ENCODE measurements at regions of chr17 and their contacts with region 1.

Region 1: DNA sequence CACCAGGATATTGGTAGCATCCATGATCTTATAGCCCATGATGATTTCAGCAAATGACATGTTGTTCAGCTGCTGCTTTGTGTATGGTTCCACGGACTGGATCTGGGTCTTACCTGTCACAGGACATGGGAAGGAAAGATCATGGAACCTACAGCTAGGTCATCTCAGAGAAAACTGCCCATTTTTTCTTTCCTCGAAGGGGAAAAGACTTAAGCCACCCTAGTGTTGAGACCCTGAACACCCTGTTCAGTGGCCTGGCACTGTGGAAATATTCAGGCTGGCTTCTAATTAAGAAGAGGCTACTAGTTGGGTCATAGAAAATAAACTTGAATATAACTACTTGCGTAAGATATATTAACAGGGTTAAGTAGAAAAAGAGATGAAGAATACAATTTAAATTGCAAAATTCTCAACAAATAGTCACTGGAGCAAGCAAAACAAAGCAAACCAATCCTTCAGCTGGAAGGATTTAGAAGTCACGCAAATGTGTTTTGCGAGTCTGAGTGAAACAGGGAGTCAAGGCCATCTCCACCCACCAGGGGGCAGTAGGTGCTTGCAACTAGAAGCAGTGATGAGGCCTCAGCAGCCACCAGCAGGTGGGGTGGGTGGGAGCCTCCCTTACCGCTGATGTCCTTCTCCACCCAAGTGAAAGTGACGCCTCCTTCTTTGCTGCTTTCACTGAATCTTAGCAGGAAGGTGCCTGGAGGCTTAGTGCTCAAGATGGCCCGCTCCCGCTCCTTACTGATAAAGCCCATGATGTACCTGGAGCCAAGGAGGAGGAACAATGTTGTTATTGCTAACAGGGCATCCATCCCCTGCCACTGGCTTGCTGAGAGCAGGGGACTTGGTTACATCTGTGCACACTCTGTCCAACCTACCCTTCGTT is 34.3 kb downstream of the STAT5A start:
- DNase-seq: peak; percentile 91
- H3K4me3 ChIP-seq: no peak overlapping the region
- H3K27ac ChIP-seq: no peak overlapping the region
- H3K27me3 ChIP-seq: no peaks in the 10 kb centered on the region
- CTCF ChIP-seq: peak; percentile 100

Region 2: DNA sequence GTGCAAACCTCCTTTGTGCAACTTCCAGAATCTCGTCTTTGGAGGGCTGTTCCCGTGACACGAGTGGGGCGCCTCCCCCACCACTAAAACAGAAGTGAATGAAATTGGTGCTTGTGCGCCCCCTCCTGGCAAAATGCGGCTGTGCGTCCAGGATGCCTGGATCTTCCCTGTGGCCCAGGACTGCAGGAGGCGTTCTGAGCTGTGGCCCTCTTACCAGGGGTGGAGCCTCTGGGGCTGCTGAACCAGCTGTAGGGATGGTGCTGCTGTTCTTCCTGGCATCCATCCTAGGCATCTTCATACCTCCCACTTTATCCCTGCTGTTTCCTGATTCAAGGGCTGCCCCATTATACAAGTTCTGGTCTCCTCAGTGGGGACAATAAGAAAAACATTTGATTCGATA is 194.9 kb after region 1 on chr17:
- in situ Hi-C with region 1: loop called (anchors 25 kb)
- DNase-seq: peak; percentile 86
- H3K4me3 ChIP-seq: no peak overlapping the region
- H3K27ac ChIP-seq: peak overlapping the region; percentile 99
- H3K27me3 ChIP-seq: no peaks in the 10 kb centered on the region
- CTCF ChIP-seq: peak; percentile 99